RWPE1 (cell line): ENCODE measurements at regions of chr1 and their contacts with region 1.

Region 1: GRCh38 chr1:201282931-201283829 is at the start of gene PKP1:
- DNase-seq: peak; percentile 90
- H3K27ac ChIP-seq: peak within 1 kb of the TSS; percentile 97
- CTCF ChIP-seq: no peak

Region 2: DNA sequence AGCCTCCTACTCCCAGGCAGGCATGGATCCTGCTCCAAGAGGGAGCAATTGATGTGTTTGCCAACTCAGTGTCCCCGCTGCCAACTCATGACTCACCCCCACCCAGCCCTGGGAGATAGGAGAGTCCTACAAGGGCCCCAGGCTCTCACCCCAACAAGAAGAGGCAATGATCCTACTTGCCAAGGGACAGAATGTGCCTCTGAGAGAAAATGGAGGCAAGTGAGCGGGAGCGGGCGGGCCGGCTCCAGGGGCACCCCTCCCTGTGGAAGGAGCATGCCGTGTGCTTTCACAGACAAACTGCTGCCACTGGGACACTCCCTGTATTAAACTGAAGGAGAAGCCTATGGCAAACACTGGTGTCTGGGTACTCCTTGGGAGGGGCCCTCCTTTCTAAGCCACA is 16.8 kb after region 1 on chr1:
- CTCF ChIA-PET with region 1: interaction called, 10 read pairs
- POLR2A ChIA-PET with region 1: interaction called, 10 read pairs
- DNase-seq: peak; percentile 97
- H3K27ac ChIP-seq: peak overlapping the region; percentile 100
- CTCF ChIP-seq: no peak

Region 3: GRCh38 chr1:201399352-201400126 is 116.4 kb after region 1 on chr1:
- CTCF ChIA-PET with region 1: no interaction called
- POLR2A ChIA-PET with region 1: no interaction called
- DNase-seq: peak; percentile 87
- H3K27ac ChIP-seq: peak overlapping the region; percentile 91
- CTCF ChIP-seq: no peak